ENCODE measurements at regions of chr3 and their contacts with region 1.

Region 1: DNA sequence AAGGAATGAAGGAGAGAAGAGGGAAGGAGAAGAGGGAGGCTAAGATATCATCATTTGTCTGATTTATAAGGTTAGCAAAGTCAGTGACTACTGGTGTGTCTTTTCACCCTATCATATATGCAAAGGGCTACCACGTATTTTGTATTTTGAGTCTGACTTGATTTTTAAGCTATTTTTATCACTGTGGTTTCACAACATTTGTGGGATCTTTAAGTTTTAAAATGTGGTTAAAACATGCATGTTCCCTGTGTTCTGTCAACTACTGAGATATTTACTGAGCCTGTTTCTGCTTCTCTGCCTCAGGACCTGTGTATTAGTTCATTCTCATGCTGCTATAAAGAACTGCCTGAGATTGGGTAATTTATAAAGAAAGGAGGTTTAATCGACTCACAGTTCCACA is 22.5 kb upstream of the SPTSSB start:
- DNase-seq: no peak
- H3K4me3 ChIP-seq: no peak overlapping the region
- H3K4me3 Mint-ChIP-seq: peak overlapping the region in 6 of 8 donors; percentile 35 to 76 (median 56)
- H3K27ac ChIP-seq: no peak overlapping the region
- H3K27ac Mint-ChIP-seq: peak overlapping the region in 5 of 7 donors; percentile 1 to 51 (median 5)
- H3K4me1 ChIP-seq: peaks cover 42% of the 10 kb centered on the region
- H3K4me1 Mint-ChIP-seq: peaks cover 37 to 67% (median 55%) of the 10 kb centered on the region in 4 donors
- H3K27me3 ChIP-seq: no peaks in the 10 kb centered on the region
- H3K27me3 Mint-ChIP-seq: peaks cover 0 to 5% of the 10 kb centered on the region in 2 donors

Region 2: DNA sequence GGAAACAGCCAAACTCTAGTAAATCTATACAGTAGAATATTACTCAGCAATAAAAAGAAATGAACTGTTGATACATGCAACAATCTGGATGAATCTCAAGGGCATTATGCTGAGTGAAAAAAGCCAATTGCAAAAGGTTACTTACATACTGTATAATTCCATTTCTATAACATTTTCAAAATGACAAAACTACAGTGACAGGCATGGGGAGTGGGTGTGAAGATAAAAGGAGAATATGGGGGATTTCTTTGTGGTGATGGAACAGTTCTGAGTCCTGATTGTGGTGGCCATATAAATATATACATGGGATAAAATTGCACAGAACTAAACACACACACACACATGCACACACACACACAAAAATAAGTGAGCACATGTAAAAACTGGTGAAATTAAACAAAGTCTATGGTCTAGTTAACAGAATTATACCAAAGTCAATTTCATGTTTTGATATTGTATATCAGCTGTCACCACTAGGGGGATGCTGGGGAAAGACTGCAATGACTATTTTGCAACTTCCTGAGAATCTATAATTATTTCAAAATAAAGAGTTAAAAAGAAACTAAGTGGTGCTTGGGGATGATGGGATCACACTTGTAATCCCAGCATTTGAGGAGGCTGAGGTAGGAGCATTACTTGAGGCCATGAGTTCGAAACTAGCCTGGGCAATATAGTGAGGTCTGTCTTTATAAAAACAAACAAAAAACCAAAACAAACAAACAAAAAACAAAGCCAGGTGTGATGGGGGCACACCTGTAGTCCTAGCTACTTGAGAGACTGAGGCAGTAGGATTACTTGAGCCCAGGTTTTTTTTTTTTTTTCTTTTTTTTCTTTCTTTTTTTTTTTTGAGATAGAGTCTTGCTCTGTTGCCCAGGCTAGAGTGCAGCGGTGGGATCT is 88.5 kb before region 1 on chr3:
- CTCF ChIA-PET with region 1: interaction called, 12 read pairs
- POLR2A ChIA-PET with region 1: interaction called, 5 read pairs
- intact Hi-C with region 1: loop called (anchors 2 kb)
- DNase-seq: peak in 4 of 5 donors; percentile 11 to 26 (median 17)
- H3K4me3 ChIP-seq: no peak overlapping the region
- H3K4me3 Mint-ChIP-seq: peak overlapping the region in 2 of 8 donors; percentile 18 to 31
- H3K27ac ChIP-seq: no peak overlapping the region
- H3K27ac Mint-ChIP-seq: no peak overlapping the region
- H3K4me1 ChIP-seq: peaks cover 24% of the 10 kb centered on the region
- H3K4me1 Mint-ChIP-seq: peaks cover 22 to 42% (median 28%) of the 10 kb centered on the region in 4 donors
- H3K27me3 ChIP-seq: no peaks in the 10 kb centered on the region
- H3K27me3 Mint-ChIP-seq: no peaks in the 10 kb centered on the region

Region 3: DNA sequence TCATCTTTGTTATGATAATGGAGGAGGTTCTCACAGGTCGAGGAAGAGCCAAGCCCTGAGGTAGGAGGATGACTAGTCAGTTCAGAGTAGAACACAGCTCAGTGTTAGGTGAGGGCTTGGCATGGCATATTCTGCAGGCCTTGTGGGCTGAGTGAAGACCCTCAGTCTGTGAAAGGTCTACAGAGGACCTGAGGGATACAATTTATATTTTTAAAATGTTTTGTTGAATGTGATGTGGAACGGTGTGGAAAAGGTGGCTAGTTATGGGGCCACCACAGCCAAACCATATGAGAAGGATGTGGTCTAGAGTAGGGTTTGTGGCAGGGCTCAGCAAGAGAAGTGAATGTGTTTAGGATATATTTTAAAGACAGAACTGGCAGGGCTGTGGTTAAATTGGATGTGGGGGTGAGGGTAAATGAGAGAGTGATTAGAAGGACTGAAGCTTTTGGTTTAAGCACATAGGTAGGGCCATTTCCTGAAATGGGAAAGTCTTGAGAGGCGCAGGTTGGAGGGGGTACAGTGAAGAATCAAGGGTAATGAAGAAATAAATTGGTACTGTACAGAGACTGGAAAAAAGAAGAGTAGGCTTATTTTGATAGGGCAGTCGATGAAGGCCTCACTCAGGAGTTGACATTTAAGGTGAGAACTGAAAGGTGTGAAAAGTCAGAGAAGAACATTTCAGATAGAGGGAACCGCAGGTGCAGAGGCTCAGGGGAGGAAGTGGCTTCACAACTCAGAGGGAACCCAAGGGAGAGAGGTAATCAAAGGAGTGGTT is 83.0 kb before region 1 on chr3:
- CTCF ChIA-PET with region 1: interaction called, 12 read pairs
- POLR2A ChIA-PET with region 1: interaction called, 5 read pairs
- intact Hi-C with region 1: loop called (anchors 2 kb)
- DNase-seq: peak; percentile 75 to 79 (median 77)
- H3K4me3 ChIP-seq: no peak overlapping the region
- H3K4me3 Mint-ChIP-seq: peak overlapping the region; percentile 1 to 77 (median 45)
- H3K27ac ChIP-seq: no peak overlapping the region
- H3K27ac Mint-ChIP-seq: peak overlapping the region; percentile 68 to 88 (median 82)
- H3K4me1 ChIP-seq: peaks cover 55% of the 10 kb centered on the region
- H3K4me1 Mint-ChIP-seq: peaks cover 47 to 83% (median 58%) of the 10 kb centered on the region in 4 donors
- H3K27me3 ChIP-seq: no peaks in the 10 kb centered on the region
- H3K27me3 Mint-ChIP-seq: no peaks in the 10 kb centered on the region

Region 4: GRCh38 chr3:161349529-161350278 is 44.1 kb before region 1 on chr3:
- CTCF ChIA-PET with region 1: interaction called, 3 read pairs
- POLR2A ChIA-PET with region 1: interaction called, 3 read pairs
- intact Hi-C with region 1: loop called (anchors 5 kb)
- DNase-seq: peak; percentile 37 to 84 (median 63)
- H3K4me3 ChIP-seq: no peak overlapping the region
- H3K4me3 Mint-ChIP-seq: peak overlapping the region in 6 of 8 donors; percentile 7 to 79 (median 41)
- H3K27ac ChIP-seq: no peak overlapping the region
- H3K27ac Mint-ChIP-seq: peak overlapping the region; percentile 2 to 74 (median 51)
- H3K4me1 ChIP-seq: peaks cover 24% of the 10 kb centered on the region
- H3K4me1 Mint-ChIP-seq: peaks cover 19 to 34% (median 20%) of the 10 kb centered on the region in 4 donors
- H3K27me3 ChIP-seq: no peaks in the 10 kb centered on the region
- H3K27me3 Mint-ChIP-seq: peaks cover 0 to 2% of the 10 kb centered on the region in 2 donors

Region 5: GRCh38 chr3:161371430-161372326 is 22.1 kb before region 1 on chr3 and contains the start of gene SPTSSB:
- CTCF ChIA-PET with region 1: interaction called, 3 read pairs
- POLR2A ChIA-PET with region 1: no interaction called
- intact Hi-C with region 1: loop called (anchors 1 kb)
- DNase-seq: peak; percentile 41 to 57 (median 45)
- H3K4me3 ChIP-seq: peak within 1 kb of the TSS; percentile 46 to 69
- H3K4me3 Mint-ChIP-seq: peak within 1 kb of the TSS; percentile 83 to 95 (median 88)
- H3K27ac ChIP-seq: no peak within 1 kb of the TSS
- H3K27ac Mint-ChIP-seq: peak within 1 kb of the TSS in 4 of 7 donors; percentile 4 to 91 (median 72)
- H3K4me1 ChIP-seq: peaks cover 17% of the 10 kb centered on the region
- H3K4me1 Mint-ChIP-seq: peaks cover 4 to 25% (median 12%) of the 10 kb centered on the region in 4 donors
- H3K27me3 ChIP-seq: peaks cover 5% of the 10 kb centered on the region
- H3K27me3 Mint-ChIP-seq: peaks cover 4 to 17% of the 10 kb centered on the region in 2 donors
- total RNA-seq, gene SPTSSB: not detected